ENCODE measurements at regions of chr6 and their contacts with region 1.

Region 1: DNA sequence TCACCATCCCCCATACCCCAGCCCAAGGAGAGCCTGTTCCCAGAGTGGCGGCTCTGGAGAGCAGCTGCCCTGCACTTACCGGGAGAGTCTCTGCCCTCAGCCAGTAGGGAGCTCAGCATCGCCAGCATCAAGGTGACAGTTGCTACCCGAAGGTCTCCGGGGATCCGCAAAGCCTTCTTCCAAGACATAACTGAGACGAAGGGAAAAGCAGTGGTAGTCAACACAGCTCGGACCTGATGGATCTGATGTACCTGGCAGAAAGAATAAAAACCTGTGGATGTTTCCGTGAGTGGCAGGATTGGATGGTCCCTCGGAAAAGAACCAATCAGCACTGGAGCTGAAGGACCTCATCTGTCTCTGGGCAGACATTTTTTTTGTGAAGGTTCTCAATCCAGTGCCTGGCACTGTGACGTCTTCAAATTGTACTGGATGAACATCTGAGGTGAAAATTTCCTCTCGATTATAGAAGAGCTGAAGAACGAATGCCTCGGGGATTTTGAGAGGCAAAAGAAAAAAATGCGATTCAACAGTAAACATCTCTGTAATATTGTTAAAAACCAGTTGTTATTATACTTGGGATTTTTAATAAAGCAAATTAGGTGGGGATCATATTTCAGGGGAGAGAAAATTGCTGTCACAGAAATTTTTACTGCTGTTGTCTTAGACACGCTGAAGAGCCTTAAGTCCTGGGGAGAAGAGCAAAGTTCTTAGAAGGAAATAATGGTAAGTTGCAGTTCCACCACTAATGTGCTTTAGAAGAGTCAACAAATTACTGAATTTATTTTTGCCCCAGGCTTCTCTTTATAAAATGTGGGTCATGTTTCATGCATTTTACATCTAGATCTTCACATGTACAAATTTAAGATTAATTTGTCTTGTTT is at the start of gene HLA-DQB1:
- DNase-seq: peak; percentile 78
- H3K4me3 Mint-ChIP-seq: peak within 1 kb of the TSS; percentile 93
- H3K27ac Mint-ChIP-seq: peak within 1 kb of the TSS; percentile 87
- H3K4me1 Mint-ChIP-seq: peaks cover 62% of the 10 kb centered on the region
- H3K27me3 Mint-ChIP-seq: peaks cover 8% of the 10 kb centered on the region
- total RNA-seq, gene HLA-DQB1: 74.4 to 74.6 TPM

Region 2: GRCh38 chr6:32439602-32440214 is 227.0 kb before region 1 on chr6 and contains the start of gene HLA-DRA:
- CTCF ChIA-PET with region 1: no interaction called
- POLR2A ChIA-PET with region 1: interaction called, 13 read pairs
- DNase-seq: peak; percentile 43
- H3K4me3 Mint-ChIP-seq: peak within 1 kb of the TSS; percentile 88
- H3K27ac Mint-ChIP-seq: peak within 1 kb of the TSS; percentile 85
- H3K4me1 Mint-ChIP-seq: peaks cover 56% of the 10 kb centered on the region
- H3K27me3 Mint-ChIP-seq: peaks cover 7% of the 10 kb centered on the region
- total RNA-seq, gene HLA-DRA: 203 to 204 TPM

Region 3: GRCh38 chr6:32622545-32623401 is 43.9 kb before region 1 on chr6:
- CTCF ChIA-PET with region 1: interaction called, 9 read pairs
- POLR2A ChIA-PET with region 1: interaction called, 24 read pairs
- DNase-seq: peak; percentile 49
- H3K4me3 Mint-ChIP-seq: peak overlapping the region; percentile 15
- H3K27ac Mint-ChIP-seq: peak overlapping the region; percentile 96
- H3K4me1 Mint-ChIP-seq: peaks cover 48% of the 10 kb centered on the region
- H3K27me3 Mint-ChIP-seq: no peaks in the 10 kb centered on the region

Region 4: GRCh38 chr6:32685603-32686002 is 18.9 kb after region 1 on chr6:
- CTCF ChIA-PET with region 1: interaction called, 5 read pairs
- POLR2A ChIA-PET with region 1: interaction called, 14 read pairs
- DNase-seq: peak; percentile 49
- H3K4me3 Mint-ChIP-seq: peak overlapping the region; percentile 2
- H3K27ac Mint-ChIP-seq: peak overlapping the region; percentile 70
- H3K4me1 Mint-ChIP-seq: peaks cover 32% of the 10 kb centered on the region
- H3K27me3 Mint-ChIP-seq: peaks cover 36% of the 10 kb centered on the region

Region 5: GRCh38 chr6:32964776-32965175 is 298.1 kb after region 1 on chr6:
- CTCF ChIA-PET with region 1: no interaction called
- POLR2A ChIA-PET with region 1: no interaction called
- DNase-seq: no peak
- H3K4me3 Mint-ChIP-seq: no peak overlapping the region
- H3K27ac Mint-ChIP-seq: no peak overlapping the region
- H3K4me1 Mint-ChIP-seq: peaks cover 38% of the 10 kb centered on the region
- H3K27me3 Mint-ChIP-seq: no peaks in the 10 kb centered on the region